ENCODE measurements at regions of chr5 and their contacts with region 1.

Region 1: GRCh38 chr5:56270568-56271392 is 37.6 kb upstream of the ANKRD55 start:
- DNase-seq: peak; percentile 69
- H3K4me3 ChIP-seq: no peak overlapping the region
- CTCF ChIP-seq: peak; percentile 100

Region 2: GRCh38 chr5:56259002-56259511 is 11.7 kb before region 1 on chr5:
- CTCF ChIA-PET with region 1: interaction called, 25 read pairs
- POLR2A ChIA-PET with region 1: no interaction called
- DNase-seq: peak; percentile 95
- H3K4me3 ChIP-seq: no peak overlapping the region
- CTCF ChIP-seq: no peak

Region 3: DNA sequence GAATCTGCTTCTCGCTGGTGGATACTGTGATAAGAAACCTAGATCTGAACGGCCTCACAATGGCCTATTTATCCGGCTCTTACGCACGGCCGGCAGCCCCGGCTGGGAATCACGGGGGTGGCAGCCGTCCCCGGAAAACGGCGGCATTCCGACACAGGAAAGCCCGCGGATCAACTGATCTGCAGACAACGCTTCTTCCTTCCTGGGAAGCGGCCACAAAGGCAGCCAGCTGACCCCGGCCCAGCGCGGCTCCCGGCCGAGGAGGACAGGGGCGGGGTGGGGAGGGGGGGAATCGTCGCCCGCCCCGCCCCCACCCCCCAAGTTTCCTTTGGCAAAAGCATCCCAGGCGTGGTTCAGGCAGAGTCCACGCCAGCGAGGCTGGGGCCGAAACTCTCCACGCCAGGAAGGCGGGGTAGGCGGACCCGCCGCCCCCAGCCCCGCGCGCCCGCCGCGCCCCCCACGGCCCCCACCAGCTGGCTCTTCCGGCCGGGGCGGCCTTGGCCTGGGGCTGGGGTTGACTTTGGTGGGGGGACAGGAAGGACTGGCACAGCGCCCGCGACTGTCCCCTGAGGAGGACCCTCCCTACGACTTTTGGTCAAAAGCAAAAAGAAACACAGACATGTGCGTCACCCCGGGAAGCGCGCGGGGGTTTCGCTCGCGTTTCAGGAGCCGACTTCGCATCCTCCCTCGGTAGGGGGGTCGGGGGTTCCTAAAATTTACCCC is 210.1 kb after region 1 on chr5:
- CTCF ChIA-PET with region 1: interaction called, 14 read pairs
- POLR2A ChIA-PET with region 1: no interaction called
- DNase-seq: no peak
- H3K4me3 ChIP-seq: peak overlapping the region; percentile 60
- CTCF ChIP-seq: no peak

Region 4: DNA sequence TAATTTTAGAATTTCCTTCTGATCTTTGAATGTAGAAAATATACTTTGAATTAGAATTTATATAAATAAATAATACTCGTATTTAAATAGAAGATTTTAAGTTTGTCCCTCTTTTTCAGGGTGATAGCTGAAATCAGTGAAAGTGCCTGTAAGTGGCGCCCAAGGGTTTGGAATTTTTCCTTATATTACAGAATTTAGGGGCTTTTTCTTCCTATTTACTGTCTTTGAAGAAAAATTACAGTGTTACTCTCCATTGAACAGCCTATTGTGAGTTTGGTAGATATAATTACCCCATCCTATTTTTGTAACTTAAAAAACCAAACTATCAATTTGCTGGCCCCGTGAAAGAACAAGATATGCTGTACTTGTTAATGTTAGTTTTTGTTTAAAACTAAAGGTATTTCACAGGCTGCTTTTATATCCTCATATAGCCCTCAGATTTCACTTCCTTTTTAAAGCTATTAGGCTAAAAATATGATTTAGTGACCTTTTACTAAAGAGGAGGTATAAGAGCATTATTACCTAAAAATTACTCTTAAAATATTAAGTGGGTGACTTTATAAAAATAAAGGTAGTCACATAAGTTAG is 547.8 kb after region 1 on chr5:
- CTCF ChIA-PET with region 1: interaction called, 10 read pairs
- POLR2A ChIA-PET with region 1: no interaction called
- DNase-seq: no peak
- H3K4me3 ChIP-seq: no peak overlapping the region
- CTCF ChIP-seq: no peak

Region 5: DNA sequence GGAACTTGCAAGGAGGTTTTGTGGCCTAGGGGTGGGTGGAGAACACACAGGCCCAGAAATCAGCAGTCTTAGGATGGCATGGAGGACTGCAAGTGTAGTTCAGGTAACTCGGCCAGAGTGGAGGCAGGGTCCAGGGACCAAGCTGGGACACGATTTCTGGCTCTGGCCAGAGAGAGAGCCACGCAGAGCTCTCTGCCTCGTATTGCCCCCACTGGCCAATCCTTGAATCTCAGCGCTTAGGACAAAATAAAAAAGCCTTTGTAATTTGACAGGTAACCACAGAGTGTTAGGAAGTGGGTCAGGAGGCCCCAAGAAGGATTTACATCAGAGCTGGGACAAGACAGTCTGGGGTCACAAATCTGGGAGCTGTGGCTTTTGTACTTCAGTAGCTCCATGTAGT is 556.3 kb after region 1 on chr5:
- CTCF ChIA-PET with region 1: interaction called, 16 read pairs
- POLR2A ChIA-PET with region 1: no interaction called
- DNase-seq: no peak
- H3K4me3 ChIP-seq: no peak overlapping the region
- CTCF ChIP-seq: no peak

Region 6: GRCh38 chr5:56900858-56901578 is 630.2 kb after region 1 on chr5:
- CTCF ChIA-PET with region 1: interaction called, 13 read pairs
- POLR2A ChIA-PET with region 1: no interaction called
- DNase-seq: no peak
- H3K4me3 ChIP-seq: no peak overlapping the region
- CTCF ChIP-seq: peak; percentile 52